Stomach (tissue), 19 donors: ENCODE measurements at regions of chr22 and their contacts with region 1.

Region 1: DNA sequence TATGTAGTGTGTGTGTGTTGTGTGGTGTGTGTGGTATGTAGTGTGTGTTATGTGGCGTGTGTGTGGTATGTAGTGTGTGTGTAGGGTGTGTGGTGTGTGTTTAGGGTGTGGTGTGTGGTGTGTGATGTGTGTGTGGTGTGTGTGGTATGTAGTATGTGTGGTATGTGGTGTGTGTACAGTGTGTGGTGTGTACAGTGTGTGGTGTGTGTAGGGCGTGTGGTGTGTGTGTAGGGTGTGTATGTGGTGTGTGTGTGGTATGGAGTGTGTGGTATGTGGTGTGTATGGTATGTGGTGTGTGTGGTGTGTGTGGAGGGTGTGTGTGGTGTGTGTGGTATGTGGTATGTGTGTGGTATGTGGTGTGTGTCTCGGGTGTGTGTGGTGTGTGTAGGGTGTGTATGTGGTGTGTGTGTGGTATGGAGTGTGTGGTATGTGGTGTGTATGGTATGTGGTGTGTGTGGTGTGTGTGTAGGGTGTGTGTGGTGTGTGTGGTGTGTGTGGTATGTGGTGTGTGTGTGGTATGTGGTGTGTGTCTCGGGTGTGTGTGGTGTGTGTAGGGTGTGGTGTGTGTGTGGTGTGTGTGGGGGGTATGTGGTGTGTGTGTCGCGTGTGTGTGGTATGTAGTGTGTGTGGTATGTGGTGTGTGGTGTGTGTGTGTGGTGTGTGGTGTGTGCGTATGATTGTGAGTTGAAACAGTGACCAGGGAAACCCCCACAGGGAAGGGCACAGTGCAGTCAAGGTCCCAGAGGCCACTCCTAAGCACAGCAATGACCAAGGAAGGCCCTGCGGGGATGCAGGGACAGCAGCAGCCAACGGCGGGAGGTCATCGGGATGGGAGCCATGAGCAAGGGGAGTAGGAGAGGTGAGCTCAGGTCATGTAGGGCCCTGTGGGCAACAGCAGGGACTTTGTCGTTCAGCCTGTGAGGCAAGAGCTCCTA is 2.9 kb upstream of the PPP6R2 start:
- DNase-seq: no peak
- H3K4me3 ChIP-seq: no peak overlapping the region
- H3K27ac ChIP-seq: no peak overlapping the region
- H3K4me1 ChIP-seq: peaks cover 0 to 12% (median 11%) of the 10 kb centered on the region in 4 donors
- H3K27me3 ChIP-seq: no peaks in the 10 kb centered on the region
- CTCF ChIP-seq: no peak
- EP300 ChIP-seq: no peak
- POLR2A ChIP-seq: no peak

Region 2: GRCh38 chr22:50276143-50276542 is 64.1 kb before region 1 on chr22:
- intact Hi-C with region 1: loop called (anchors 5 kb)
- DNase-seq: peak; percentile 80 to 81
- H3K4me3 ChIP-seq: peak overlapping the region in 2 of 4 donors; percentile 6 to 7
- H3K27ac ChIP-seq: peak overlapping the region; percentile 3 to 71 (median 46)
- H3K4me1 ChIP-seq: peaks cover 26 to 75% (median 50%) of the 10 kb centered on the region in 4 donors
- H3K27me3 ChIP-seq: peaks cover 0 to 18% (median 3%) of the 10 kb centered on the region in 3 donors
- CTCF ChIP-seq: peak in 4 of 7 experiments; percentile 36 to 94 (median 75)
- EP300 ChIP-seq: no peak
- POLR2A ChIP-seq: no peak

Region 3: DNA sequence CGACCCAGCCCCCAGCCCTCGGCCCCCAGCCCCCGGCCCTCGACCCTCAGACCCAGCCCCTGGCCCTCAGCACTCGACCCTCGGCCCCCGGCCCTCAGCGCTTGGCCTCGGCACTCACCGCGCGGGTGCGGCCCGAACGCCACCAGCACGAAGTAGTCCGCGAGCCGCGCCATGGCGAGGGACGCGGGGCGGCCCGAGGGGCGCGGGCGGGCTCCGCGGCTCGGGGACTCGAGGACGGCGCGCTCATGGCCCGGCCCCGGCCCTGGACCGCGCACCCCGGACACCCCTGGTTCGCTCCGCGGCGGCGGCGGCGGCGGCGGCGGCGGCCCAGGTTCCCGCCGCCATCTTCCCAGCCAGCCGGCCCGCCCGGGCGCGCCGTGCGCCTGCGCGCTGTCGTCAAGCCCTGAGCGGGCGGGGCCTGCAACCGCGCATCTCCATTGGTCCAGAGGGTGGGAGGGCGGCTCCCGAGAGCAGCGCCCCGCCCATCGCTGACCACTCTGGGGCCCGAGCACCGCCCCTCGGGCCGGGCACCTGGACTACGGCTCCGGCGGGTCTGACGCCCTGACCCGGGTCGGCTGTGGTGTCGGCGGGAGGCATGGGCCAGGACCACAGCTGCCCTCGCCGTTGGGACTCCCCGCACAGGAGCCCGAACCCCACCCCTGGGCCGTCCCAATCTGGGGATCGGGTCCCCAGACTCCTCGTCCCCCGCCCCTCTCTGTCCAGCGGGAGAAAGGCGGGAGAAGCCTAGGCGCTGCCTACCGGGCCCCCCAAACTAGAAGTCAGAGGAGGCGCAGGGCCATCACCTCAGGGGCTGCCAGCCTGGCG is 134.7 kb after region 1 on chr22 and contains the start of gene SBF1:
- intact Hi-C with region 1: no loop called
- DNase-seq: peak; percentile 96 to 98
- H3K4me3 ChIP-seq: peak within 1 kb of the TSS; percentile 83 to 99 (median 98)
- H3K27ac ChIP-seq: peak within 1 kb of the TSS; percentile 81 to 93 (median 87)
- H3K4me1 ChIP-seq: peaks cover 45 to 53% (median 51%) of the 10 kb centered on the region in 4 donors
- H3K27me3 ChIP-seq: peaks cover 0 to 14% (median 0%) of the 10 kb centered on the region in 3 donors
- CTCF ChIP-seq: no peak
- EP300 ChIP-seq: no peak
- POLR2A ChIP-seq: no peak
- total RNA-seq, gene SBF1: 34.9 to 122 (median 65.2) TPM